ENCODE measurements at regions of chr3 and their contacts with region 1.

Region 1: GRCh38 chr3:58471025-58471887 is 20.6 kb upstream of the KCTD6 start:
- DNase-seq: peak; percentile 95
- ATAC-seq: peak; percentile 91
- H3K4me3 ChIP-seq: peak overlapping the region; percentile 8 to 58 (median 33); a peak in 3 of 6 replicates
- H3K27ac ChIP-seq: peak overlapping the region; percentile 84
- H3K4me1 ChIP-seq: peaks cover 73% of the 10 kb centered on the region
- H3K27me3 ChIP-seq: no peaks in the 10 kb centered on the region
- CTCF ChIP-seq: no peak
- EP300 ChIP-seq: peak; percentile 81 to 92
- POLR2A ChIP-seq: peak in 1 of 2 experiments; percentile 60; a peak in 2 of 4 replicates
- RAD21 ChIP-seq: no peak; the same call in 1 of the 2 replicates

Region 2: GRCh38 chr3:58433400-58434169 is 37.7 kb before region 1 on chr3 and contains the start of gene PDHB:
- CTCF ChIA-PET with region 1: no interaction called
- POLR2A ChIA-PET with region 1: interaction called, 11 read pairs
- in situ Hi-C with region 1: no loop called
- intact Hi-C with region 1: loop called (anchors 5 kb)
- DNase-seq: peak; percentile 77
- ATAC-seq: peak; percentile 97
- H3K4me3 ChIP-seq: peak within 1 kb of the TSS; percentile 68 to 97 (median 93)
- H3K27ac ChIP-seq: peak within 1 kb of the TSS; percentile 92
- H3K4me1 ChIP-seq: peaks cover 53% of the 10 kb centered on the region
- H3K27me3 ChIP-seq: peaks cover 0 to 1% of the 10 kb centered on the region in 2 experiments; a peak in 1 of 5 replicates
- CTCF ChIP-seq: peak; percentile 22; the same call in 1 of the 2 replicates
- EP300 ChIP-seq: peak in 1 of 2 experiments; percentile 73; a peak in 2 of 4 replicates
- POLR2A ChIP-seq: peak; percentile 86 to 93
- RAD21 ChIP-seq: peak; percentile 40
- total RNA-seq, gene PDHB: 153 and 229 TPM in 2 replicates

Region 3: DNA sequence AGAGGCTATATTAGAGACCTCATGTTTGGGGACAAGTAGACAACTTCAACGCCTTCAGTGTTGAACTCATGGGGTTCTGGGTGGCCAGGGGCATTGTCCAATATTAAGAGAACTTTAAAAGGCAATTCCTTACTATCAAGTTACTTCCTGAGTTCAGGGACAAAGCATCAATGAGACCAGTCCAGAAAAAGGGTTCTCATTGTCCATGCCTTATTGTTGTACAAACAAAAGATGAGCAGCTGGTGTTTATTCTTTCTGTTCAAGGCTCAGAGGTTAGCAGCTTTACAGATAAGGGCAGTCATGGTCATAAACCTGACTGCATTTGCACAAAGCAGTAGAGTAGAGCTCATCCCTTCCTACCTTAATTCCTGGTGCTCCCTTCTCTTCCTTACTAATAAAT is 19.1 kb before region 1 on chr3:
- CTCF ChIA-PET with region 1: no interaction called
- POLR2A ChIA-PET with region 1: interaction called, 13 read pairs
- in situ Hi-C with region 1: no loop called
- intact Hi-C with region 1: loop called (anchors 2 kb)
- DNase-seq: peak; percentile 95
- ATAC-seq: peak; percentile 99
- H3K4me3 ChIP-seq: peak overlapping the region in 1 of 3 experiments; percentile 2; a peak in 1 of 6 replicates
- H3K27ac ChIP-seq: peak overlapping the region; percentile 83
- H3K4me1 ChIP-seq: peaks cover 34% of the 10 kb centered on the region
- H3K27me3 ChIP-seq: no peaks in the 10 kb centered on the region
- CTCF ChIP-seq: 0 out of 2 replicates have a peak, but pooled peaks have one; percentile 12
- EP300 ChIP-seq: peak; percentile 73 to 95; a peak in 3 of 4 replicates
- POLR2A ChIP-seq: peak; percentile 27 to 31; a peak in 1 of 4 replicates
- RAD21 ChIP-seq: no peak

Region 4: GRCh38 chr3:58484722-58485069 is 13.4 kb after region 1 on chr3:
- CTCF ChIA-PET with region 1: no interaction called
- POLR2A ChIA-PET with region 1: interaction called, 26 read pairs
- in situ Hi-C with region 1: no loop called
- intact Hi-C with region 1: loop called (anchors 2 kb)
- DNase-seq: no peak
- ATAC-seq: no peak
- H3K4me3 ChIP-seq: no peak overlapping the region
- H3K27ac ChIP-seq: no peak overlapping the region
- H3K4me1 ChIP-seq: peaks cover 69% of the 10 kb centered on the region
- H3K27me3 ChIP-seq: peaks cover 0 to 2% of the 10 kb centered on the region in 2 experiments; a peak in 2 of 5 replicates
- CTCF ChIP-seq: no peak
- EP300 ChIP-seq: no peak
- POLR2A ChIP-seq: no peak
- RAD21 ChIP-seq: no peak

Region 5: GRCh38 chr3:58502872-58503271 is 31.6 kb after region 1 on chr3:
- CTCF ChIA-PET with region 1: no interaction called
- POLR2A ChIA-PET with region 1: no interaction called
- in situ Hi-C with region 1: no loop called
- intact Hi-C with region 1: no loop called
- DNase-seq: no peak
- ATAC-seq: no peak
- H3K4me3 ChIP-seq: no peak overlapping the region
- H3K27ac ChIP-seq: no peak overlapping the region
- H3K4me1 ChIP-seq: no peaks in the 10 kb centered on the region
- H3K27me3 ChIP-seq: no peaks in the 10 kb centered on the region
- CTCF ChIP-seq: no peak
- EP300 ChIP-seq: no peak
- POLR2A ChIP-seq: no peak
- RAD21 ChIP-seq: no peak

Region 6: DNA sequence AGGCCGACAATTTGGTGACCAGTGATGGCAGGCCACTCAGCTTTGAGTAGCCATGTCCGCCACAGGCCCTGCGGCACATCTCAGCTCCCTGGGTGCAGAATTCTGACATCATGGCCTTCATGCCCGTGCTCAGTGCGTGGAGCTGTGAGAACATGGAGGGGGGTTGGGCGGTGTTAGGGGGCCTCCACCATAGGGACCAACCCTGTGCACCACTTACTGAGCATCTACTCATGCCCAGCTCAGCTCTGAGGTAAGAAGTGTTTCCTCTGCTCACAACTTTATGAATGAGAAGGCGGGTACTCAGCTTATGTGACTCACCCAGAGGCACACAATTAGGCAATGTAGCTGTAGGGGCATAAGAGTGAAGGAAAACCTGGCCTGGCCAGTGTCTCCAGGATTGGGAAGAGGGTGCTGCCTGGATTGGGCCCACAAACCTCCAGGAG is 55.3 kb after region 1 on chr3:
- CTCF ChIA-PET with region 1: no interaction called
- POLR2A ChIA-PET with region 1: interaction called, 10 read pairs
- in situ Hi-C with region 1: no loop called
- intact Hi-C with region 1: no loop called
- DNase-seq: peak; percentile 88
- ATAC-seq: peak; percentile 76
- H3K4me3 ChIP-seq: peak overlapping the region in 1 of 3 experiments; percentile 24; a peak in 2 of 6 replicates
- H3K27ac ChIP-seq: no peak overlapping the region
- H3K4me1 ChIP-seq: peaks cover 66% of the 10 kb centered on the region
- H3K27me3 ChIP-seq: no peaks in the 10 kb centered on the region
- CTCF ChIP-seq: no peak
- EP300 ChIP-seq: peak in 1 of 2 experiments; percentile 75; a peak in 1 of 4 replicates
- POLR2A ChIP-seq: peak; percentile 49 to 56; a peak in 2 of 4 replicates
- RAD21 ChIP-seq: peak; percentile 13; the same call in 1 of the 2 replicates